Right cardiac atrium (tissue), 5 donors: ENCODE measurements at regions of chr16 and their contacts with region 1.

Region 1: GRCh38 chr16:85137323-85138072 is 25.2 kb upstream of the CIBAR2 start:
- DNase-seq: peak; percentile 97 to 99 (median 98)
- ATAC-seq: peak; percentile 93 to 94
- H3K4me3 ChIP-seq: peak overlapping the region; percentile 17
- H3K27ac ChIP-seq: peak overlapping the region; percentile 61
- H3K4me1 ChIP-seq: peaks cover 18% of the 10 kb centered on the region
- H3K27me3 ChIP-seq: no peaks in the 10 kb centered on the region

Region 2: GRCh38 chr16:84699712-84700445 is 437.6 kb before region 1 on chr16 and contains the start of gene USP10:
- intact Hi-C with region 1: no loop called
- DNase-seq: peak; percentile 81 to 94 (median 92)
- ATAC-seq: peak; percentile 88 to 91
- H3K4me3 ChIP-seq: peak within 1 kb of the TSS; percentile 87
- H3K27ac ChIP-seq: peak within 1 kb of the TSS; percentile 49
- H3K4me1 ChIP-seq: no peaks in the 10 kb centered on the region
- H3K27me3 ChIP-seq: no peaks in the 10 kb centered on the region
- total RNA-seq, gene USP10: 45.5 to 66.5 (median 62.9) TPM

Region 3: GRCh38 chr16:84898447-84898846 is 239.1 kb before region 1 on chr16:
- intact Hi-C with region 1: no loop called
- DNase-seq: no peak
- ATAC-seq: peak; percentile 30 to 44
- H3K4me3 ChIP-seq: no peak overlapping the region
- H3K27ac ChIP-seq: peak overlapping the region; percentile 39
- H3K4me1 ChIP-seq: no peaks in the 10 kb centered on the region
- H3K27me3 ChIP-seq: no peaks in the 10 kb centered on the region

Region 4: DNA sequence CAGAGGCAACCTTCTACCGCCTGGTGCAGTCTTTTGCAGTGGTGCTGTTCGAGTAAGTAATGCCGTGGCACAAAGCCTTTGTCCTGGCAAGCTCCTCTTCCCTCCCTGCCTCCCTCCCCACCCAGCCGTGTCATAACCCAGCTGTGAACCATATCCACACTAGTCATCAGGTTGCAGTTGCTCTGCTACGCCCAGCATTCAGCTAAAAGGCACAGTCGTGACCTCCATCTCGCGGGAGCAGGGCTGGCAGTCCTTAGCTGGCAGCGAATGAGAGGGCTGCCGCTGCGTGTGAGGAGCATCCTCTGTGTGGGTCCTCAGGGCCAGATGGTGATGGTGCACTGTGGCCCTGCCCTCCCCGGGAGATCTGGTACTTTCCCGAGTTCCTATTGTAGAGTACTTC is 64.6 kb before region 1 on chr16:
- intact Hi-C with region 1: loop called in 1 of 4 experiments (anchors 10 kb)
- DNase-seq: peak; percentile 84 to 90 (median 87)
- ATAC-seq: peak; percentile 87 to 91
- H3K4me3 ChIP-seq: no peak overlapping the region
- H3K27ac ChIP-seq: no peak overlapping the region
- H3K4me1 ChIP-seq: no peaks in the 10 kb centered on the region
- H3K27me3 ChIP-seq: no peaks in the 10 kb centered on the region

Region 5: DNA sequence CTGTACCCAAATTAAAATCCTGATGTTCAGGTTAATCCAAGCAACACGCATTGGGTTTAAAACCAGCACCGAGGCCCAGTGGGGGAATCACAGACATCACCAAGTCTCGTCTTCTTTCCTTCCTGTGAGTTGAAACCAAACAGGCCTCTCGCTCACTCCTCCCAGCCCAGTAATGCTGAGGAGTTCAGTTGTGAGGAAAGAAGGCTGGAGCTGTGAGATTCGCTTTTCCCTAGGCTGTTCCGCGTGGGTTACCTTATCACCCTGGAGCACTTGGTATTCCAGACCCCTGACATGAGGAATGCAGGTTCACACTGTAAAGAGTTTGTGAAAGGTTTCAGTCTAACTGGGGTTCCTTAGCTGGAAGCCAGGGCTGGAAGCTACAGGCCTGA is 46.0 kb before region 1 on chr16:
- intact Hi-C with region 1: no loop called
- DNase-seq: peak in 2 of 3 donors; percentile 0 to 15
- ATAC-seq: no peak
- H3K4me3 ChIP-seq: no peak overlapping the region
- H3K27ac ChIP-seq: no peak overlapping the region
- H3K4me1 ChIP-seq: peaks cover 6% of the 10 kb centered on the region
- H3K27me3 ChIP-seq: no peaks in the 10 kb centered on the region